ENCODE measurements at regions of chr3 and their contacts with region 1.

Region 1: DNA sequence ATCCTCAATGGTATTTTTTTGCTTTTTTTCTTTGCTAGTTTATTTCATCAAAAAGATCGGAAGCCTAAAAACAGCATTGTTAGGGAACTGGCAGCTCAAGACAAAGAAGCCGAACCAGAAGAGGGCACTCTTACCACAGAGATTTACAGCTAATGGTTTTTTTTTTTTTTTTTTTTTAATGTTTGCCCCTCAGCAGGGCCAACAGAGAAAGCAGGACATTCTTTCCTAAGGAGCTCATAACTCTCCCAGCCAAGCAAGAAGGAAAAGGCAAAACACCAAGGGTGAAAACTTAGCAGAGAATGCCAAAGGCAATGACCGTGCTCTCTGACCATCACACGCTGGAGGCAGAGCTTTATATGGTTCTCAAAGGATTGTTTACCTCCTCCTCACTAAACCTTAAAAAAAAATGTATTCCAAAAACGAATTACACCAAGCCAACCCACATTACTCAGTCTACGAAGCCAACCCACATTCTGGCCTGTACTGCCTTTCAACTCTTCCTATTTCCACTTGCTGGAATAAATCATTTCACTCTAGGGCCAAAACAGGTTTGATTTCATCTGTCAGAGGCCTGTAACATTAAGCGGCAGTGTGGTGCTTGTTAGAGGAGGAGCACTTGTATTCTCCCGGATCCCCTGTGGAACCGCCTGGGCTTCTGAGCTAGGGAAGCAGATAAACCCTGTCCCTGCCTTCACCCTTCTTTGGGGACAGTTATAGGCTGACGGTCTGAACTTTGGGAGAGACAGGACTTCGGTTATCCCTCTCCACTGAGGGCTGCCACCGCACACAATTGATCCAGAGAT is 35.6 kb upstream of the GYG1 start:
- DNase-seq: peak in 2 of 3 donors; percentile 19 to 60
- ATAC-seq: peak; percentile 94 to 95
- H3K4me3 ChIP-seq: no peak overlapping the region
- H3K27ac ChIP-seq: peak overlapping the region; percentile 96
- H3K4me1 ChIP-seq: no peaks in the 10 kb centered on the region
- H3K27me3 ChIP-seq: no peaks in the 10 kb centered on the region

Region 2: DNA sequence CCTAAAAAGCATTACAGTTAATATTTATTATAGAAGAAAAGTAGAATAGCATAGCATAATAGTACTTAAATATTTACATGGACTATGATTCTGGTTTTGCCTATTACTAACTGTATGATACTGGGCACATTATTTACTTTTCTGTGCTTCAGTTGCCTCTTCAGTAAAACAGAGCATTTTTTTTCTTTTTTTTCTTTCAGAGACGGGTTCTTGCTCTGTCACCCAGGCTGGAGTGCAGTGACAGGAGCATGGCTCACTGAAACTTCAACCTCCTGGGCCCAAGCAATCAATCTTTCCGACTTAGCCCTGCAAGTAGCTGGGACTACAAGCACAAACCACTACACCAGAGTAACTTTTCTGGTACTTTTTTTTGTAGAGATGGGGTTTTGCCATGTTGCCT is 82.6 kb after region 1 on chr3:
- intact Hi-C with region 1: no loop called
- DNase-seq: no peak
- ATAC-seq: no peak
- H3K4me3 ChIP-seq: no peak overlapping the region
- H3K27ac ChIP-seq: no peak overlapping the region
- H3K4me1 ChIP-seq: no peaks in the 10 kb centered on the region
- H3K27me3 ChIP-seq: no peaks in the 10 kb centered on the region

Region 3: GRCh38 chr3:149114458-149114857 is 158.7 kb after region 1 on chr3:
- intact Hi-C with region 1: loop called in 1 of 4 experiments (anchors 10 kb)
- DNase-seq: no peak
- ATAC-seq: peak; percentile 36 to 45
- H3K4me3 ChIP-seq: no peak overlapping the region
- H3K27ac ChIP-seq: no peak overlapping the region
- H3K4me1 ChIP-seq: no peaks in the 10 kb centered on the region
- H3K27me3 ChIP-seq: no peaks in the 10 kb centered on the region

Measured in right cardiac atrium (tissue), 5 donors.